Activated T-helper 1 cell treated with anti-CD3 and anti-CD28 coated beads, Interleukin-12 subunit alpha, Interleukin-12 subunit beta, Interleukin-2, Interleukin-4 antibody, amounts not matched to agents 30 ng/mL and 10 ng/mL and 1 ng/mL, durations not matched to agents 14 hours and 24 hours and 36 hours (primary cell): ENCODE measurements at regions of chr1 and their contacts with region 1.

Region 1: DNA sequence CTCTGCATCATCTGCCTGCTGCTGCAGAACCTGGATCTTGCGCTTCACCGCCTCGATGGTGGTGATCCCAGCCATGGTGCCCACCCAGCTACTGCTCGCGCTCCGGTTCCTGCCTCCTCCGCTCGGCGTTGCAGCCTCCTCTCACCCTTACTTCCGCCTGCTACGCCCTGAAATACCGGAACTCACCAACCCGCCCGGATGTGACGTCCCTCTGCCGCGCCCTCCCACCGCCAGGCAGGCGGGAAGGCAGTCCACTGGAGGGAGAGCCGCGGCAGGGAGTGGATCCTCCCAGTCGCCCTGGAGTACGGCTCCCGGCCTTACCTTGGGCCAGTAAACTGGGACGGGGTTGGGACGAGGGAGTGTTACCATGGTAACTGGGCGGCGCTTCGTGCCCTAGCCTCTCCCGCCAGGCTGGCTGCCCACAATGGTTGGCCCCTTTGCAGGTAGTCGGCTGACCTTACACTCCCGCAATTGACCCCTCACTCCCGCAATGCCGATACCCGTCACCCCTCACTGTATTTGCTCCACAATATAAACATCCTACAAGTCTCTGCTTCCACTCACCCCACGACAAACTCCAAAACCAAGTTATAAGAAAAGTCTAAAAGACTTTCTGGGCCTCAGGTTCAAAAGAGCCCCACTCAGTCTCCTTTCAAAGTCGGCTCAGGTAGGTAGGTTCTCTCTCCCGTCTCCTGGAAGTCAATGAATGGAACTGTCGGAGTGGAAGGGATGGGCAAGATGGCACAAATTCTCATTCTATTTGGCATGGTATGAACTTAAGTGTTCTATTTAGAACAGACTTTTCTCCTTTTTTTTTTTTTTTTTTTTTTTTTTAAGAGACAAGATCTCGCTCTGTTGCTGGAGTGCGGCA is 8.6 kb downstream of the TPM3 start:
- DNase-seq: peak; percentile 93
- H3K4me3 Mint-ChIP-seq: peak overlapping the region; percentile 99
- H3K27ac Mint-ChIP-seq: peak overlapping the region; percentile 99
- H3K4me1 Mint-ChIP-seq: peaks cover 53% of the 10 kb centered on the region
- H3K27me3 Mint-ChIP-seq: peaks cover 6% of the 10 kb centered on the region

Region 2: GRCh38 chr1:153670859-153671627 is 512.2 kb before region 1 on chr1 and contains the start of gene ILF2:
- intact Hi-C with region 1: loop called (anchors 1 kb)
- DNase-seq: peak; percentile 96
- H3K4me3 Mint-ChIP-seq: no peak within 1 kb of the TSS
- H3K27ac Mint-ChIP-seq: peak within 1 kb of the TSS; percentile 56
- H3K4me1 Mint-ChIP-seq: peaks cover 29% of the 10 kb centered on the region
- H3K27me3 Mint-ChIP-seq: no peaks in the 10 kb centered on the region
- total RNA-seq, gene ILF2: 354 and 366 TPM in 2 replicates

Region 3: DNA sequence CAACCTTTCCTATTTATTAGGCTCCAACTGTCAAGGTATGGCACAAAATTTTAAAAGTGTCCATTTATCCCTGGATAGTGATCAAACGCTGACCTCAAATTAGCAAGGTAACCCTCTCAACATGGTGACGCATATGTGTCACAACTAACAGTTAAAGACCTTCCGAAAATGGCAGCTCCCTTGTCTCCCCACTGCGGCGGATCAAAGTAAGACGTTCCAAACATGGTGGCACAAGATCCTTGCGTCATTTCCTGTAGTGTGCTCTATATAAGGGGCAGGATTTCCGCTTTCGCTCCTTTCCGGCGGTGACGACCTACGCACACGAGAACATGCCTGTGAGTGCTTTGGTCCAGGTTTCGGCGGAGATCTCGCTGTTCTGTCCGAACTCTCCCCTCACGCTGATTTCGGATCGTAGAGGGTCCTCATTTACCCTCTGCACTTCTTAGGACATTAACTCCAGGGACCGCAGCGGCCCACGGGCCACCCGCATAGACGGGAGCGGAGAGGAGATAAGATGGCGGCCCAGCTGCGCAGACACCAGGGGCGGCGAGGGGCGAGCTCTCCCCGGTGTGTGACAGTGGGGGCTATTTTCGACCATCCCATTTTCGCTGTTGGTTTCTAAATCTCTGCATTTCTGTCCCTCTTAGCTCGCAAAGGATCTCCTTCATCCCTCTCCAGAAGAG is 192.7 kb before region 1 on chr1 and contains the start of gene RPS27:
- intact Hi-C with region 1: loop called (anchors 1 kb)
- DNase-seq: peak; percentile 86
- H3K4me3 Mint-ChIP-seq: peak within 1 kb of the TSS; percentile 94
- H3K27ac Mint-ChIP-seq: peak within 1 kb of the TSS; percentile 94
- H3K4me1 Mint-ChIP-seq: peaks cover 51% of the 10 kb centered on the region
- H3K27me3 Mint-ChIP-seq: peaks cover 1% of the 10 kb centered on the region
- total RNA-seq, gene RPS27: 1,226 and 1,349 TPM in 2 replicates

Region 4: DNA sequence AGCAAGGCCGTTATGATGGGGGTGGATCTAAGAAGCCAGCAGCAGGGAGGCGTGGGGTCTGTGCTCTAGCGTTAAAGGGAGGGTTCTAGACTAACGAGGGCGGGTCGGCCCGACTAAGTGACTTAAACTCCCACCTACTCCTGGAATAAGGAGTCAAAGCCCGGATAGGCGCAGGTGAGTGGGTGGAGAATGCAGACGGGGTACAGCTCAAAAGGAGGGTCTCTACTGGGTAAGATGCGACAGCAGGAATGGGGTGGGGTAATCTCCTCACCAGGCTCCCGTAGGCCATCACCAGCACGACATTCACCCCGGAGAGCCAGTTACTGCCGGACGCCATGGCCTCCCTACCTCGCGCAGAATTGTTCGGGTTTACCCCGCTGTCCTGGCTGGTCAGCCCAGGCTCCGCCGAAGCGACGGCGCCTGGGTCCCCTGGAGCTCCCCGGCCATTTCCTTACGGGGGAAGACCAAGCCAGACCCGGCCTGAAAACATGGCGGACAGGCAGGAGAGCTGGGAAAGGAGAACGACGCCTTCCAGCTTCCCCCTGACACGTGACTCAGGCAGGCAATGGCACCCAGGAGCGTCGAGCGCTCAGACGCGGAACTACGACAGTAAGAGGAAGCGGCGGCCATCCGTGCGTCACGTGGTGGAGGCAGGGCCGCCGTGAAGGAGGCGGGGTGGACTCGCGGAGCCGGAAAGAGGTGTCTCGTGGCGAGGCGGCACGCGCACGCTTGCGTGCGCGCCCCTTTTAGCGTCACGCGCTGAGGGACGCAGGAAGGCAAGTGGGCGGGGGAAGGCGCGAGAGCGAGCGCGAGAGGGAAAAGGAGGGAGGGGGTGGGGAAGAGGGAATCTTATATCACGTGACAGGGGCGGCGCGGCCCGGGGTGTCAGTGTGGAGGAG is 37.0 kb after region 1 on chr1 and contains the start of gene UBAP2L:
- intact Hi-C with region 1: loop called (anchors 1 kb)
- DNase-seq: peak; percentile 99
- H3K4me3 Mint-ChIP-seq: peak within 1 kb of the TSS; percentile 97
- H3K27ac Mint-ChIP-seq: peak within 1 kb of the TSS; percentile 99
- H3K4me1 Mint-ChIP-seq: peaks cover 62% of the 10 kb centered on the region
- H3K27me3 Mint-ChIP-seq: no peaks in the 10 kb centered on the region
- total RNA-seq, gene UBAP2L: 258 and 284 TPM in 2 replicates

Region 5: DNA sequence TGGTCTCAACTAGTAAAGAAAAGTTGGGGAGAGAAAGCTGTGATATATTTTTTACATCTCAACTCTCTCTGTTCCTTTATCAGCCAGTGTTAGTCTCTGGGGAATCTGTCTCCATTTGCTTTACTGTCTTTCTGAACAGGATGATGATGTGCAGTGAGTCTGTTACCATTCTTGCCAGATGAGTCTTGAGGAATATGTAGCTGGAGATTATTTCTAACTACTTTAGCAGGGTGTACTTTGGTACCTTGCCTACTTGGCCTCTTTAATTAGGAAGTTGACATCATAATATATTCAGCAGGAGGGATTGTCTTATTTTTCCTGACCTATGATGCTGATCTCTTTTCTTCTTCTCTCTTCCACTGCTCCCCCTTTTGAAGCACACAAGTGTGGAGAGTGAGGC is 73.4 kb after region 1 on chr1:
- intact Hi-C with region 1: no loop called
- DNase-seq: no peak
- H3K4me3 Mint-ChIP-seq: no peak overlapping the region
- H3K27ac Mint-ChIP-seq: peak overlapping the region; percentile 8
- H3K4me1 Mint-ChIP-seq: no peaks in the 10 kb centered on the region
- H3K27me3 Mint-ChIP-seq: no peaks in the 10 kb centered on the region

Region 6: DNA sequence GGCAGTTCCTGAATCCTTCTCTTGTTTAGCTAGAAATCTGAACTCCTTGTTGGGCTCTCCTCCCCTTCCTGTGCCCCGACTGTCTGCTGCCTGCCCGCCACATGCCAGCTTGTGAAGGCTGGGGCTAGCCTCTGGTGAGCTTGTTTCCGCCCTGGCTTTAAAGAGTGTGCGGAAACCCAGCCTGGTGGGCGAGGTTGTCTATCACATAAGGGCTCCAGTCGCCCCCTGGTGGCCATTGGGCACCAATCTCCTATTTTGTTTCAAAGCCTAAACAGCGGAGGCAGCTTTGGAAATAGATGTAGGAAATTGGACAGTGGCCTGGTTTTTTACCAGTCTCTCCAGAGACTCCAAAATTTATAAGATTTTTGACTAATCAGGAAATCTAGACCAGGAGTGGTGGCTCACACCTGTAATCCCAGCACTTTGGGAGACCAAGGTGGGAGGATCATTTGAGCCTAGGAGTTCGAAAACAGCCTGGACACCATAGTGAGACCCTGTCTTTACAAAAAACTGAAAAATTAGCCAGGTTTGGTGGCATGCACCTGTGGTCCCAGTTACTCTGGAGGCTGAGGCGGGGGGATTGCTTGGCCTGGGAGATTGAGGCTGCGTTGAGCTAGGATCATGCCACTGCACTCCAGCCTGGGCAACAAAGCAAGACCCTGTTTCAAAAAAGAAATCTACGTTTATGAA is 151.9 kb after region 1 on chr1:
- intact Hi-C with region 1: loop called (anchors 1 kb)
- DNase-seq: peak; percentile 78
- H3K4me3 Mint-ChIP-seq: no peak overlapping the region
- H3K27ac Mint-ChIP-seq: peak overlapping the region; percentile 75
- H3K4me1 Mint-ChIP-seq: peaks cover 65% of the 10 kb centered on the region
- H3K27me3 Mint-ChIP-seq: no peaks in the 10 kb centered on the region

Region 7: DNA sequence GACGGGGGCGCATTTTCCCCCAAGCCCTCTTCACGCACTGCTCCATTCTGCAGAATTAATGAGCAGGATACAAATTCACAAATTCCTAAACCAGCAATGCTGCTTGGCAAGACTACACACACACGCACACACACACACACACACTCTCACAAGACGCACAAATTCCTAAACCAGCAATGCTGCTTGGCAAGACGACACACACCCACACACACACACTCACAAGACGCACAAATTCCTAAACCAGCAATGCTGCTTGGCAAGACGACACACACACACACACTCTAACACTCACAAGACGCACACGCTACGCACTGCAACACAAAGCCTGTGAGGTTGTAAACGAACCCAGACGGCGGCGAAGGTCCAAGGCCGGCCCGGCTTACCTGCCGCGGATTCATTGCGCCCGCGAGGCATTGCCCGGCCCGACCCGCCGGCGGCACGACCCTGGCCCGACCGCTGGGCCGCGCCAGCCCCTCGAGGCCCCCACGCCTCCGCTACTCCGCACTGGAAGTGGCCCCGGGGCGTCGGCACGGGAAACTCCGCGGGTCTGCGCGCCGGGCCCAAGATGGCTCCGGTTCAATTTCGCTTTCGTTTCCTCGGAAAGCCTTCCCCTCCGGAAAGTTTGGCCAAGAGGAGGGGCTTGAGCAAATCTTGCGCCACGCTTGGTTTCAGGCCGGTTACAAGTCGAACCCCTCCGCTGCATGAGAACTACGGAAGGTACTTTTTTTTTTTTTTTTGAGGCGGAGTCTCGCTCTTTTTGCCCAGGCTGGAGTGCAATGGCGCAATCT is 424.5 kb after region 1 on chr1 and contains the start of gene ADAR:
- intact Hi-C with region 1: loop called (anchors 10 kb)
- DNase-seq: peak; percentile 93
- H3K4me3 Mint-ChIP-seq: peak within 1 kb of the TSS; percentile 94
- H3K27ac Mint-ChIP-seq: peak within 1 kb of the TSS; percentile 98
- H3K4me1 Mint-ChIP-seq: peaks cover 68% of the 10 kb centered on the region
- H3K27me3 Mint-ChIP-seq: no peaks in the 10 kb centered on the region
- total RNA-seq, gene ADAR: 299 and 301 TPM in 2 replicates